B cell (primary cell): ENCODE measurements at regions of chr5 and their contacts with region 1.

Region 1: DNA sequence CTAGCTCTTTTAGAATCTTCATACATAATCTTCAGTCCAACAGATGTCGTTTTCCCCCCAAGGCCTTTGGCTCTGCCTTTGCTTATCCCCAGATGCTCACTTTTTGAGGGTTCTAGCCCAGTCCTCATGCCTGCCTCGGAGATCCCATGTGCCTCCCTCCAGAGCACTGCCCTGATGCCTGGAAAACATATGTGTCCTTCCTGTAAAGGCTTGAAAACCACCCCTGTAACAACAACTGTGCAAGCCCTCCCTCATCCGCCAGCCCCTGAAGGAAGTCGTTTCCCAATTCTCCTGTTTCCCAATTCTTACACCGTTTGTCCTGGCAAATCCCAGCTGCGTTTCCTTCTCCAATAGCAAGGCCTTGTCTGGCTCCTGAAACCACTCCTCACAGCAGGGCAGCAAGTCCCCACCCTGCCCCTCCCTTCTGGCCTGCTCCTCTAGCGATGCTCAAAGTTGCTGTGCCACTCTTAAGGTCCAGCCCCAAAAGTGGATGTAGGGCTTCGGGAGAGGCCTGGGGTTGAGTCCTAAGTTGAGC is 52.2 kb downstream of the SLC36A1 start:
- DNase-seq: no peak
- ATAC-seq: no peak
- H3K4me3 ChIP-seq: no peak overlapping the region
- H3K4me3 Mint-ChIP-seq: no peak overlapping the region
- H3K27ac ChIP-seq: no peak overlapping the region
- H3K27ac Mint-ChIP-seq: no peak overlapping the region
- H3K4me1 ChIP-seq: peaks cover 0 to 6% of the 10 kb centered on the region in 2 donors
- H3K4me1 Mint-ChIP-seq: peaks cover 4% of the 10 kb centered on the region
- H3K27me3 ChIP-seq: no peaks in the 10 kb centered on the region
- H3K27me3 Mint-ChIP-seq: no peaks in the 10 kb centered on the region
- CTCF ChIP-seq: no peak

Region 2: GRCh38 chr5:151174612-151175101 is 324.9 kb before region 1 on chr5:
- CTCF ChIA-PET with region 1: no interaction called
- POLR2A ChIA-PET with region 1: no interaction called
- intact Hi-C with region 1: loop called (anchors 5 kb)
- DNase-seq: no peak
- ATAC-seq: no peak
- H3K4me3 ChIP-seq: no peak overlapping the region
- H3K4me3 Mint-ChIP-seq: no peak overlapping the region
- H3K27ac ChIP-seq: no peak overlapping the region
- H3K27ac Mint-ChIP-seq: peak overlapping the region; percentile 53
- H3K4me1 ChIP-seq: peaks cover 43 to 44% of the 10 kb centered on the region in 2 donors
- H3K4me1 Mint-ChIP-seq: peaks cover 58% of the 10 kb centered on the region
- H3K27me3 ChIP-seq: no peaks in the 10 kb centered on the region
- H3K27me3 Mint-ChIP-seq: no peaks in the 10 kb centered on the region
- CTCF ChIP-seq: no peak